IMR-90 (cell line): ENCODE measurements at regions of chrX and their contacts with region 1.

Region 1: DNA sequence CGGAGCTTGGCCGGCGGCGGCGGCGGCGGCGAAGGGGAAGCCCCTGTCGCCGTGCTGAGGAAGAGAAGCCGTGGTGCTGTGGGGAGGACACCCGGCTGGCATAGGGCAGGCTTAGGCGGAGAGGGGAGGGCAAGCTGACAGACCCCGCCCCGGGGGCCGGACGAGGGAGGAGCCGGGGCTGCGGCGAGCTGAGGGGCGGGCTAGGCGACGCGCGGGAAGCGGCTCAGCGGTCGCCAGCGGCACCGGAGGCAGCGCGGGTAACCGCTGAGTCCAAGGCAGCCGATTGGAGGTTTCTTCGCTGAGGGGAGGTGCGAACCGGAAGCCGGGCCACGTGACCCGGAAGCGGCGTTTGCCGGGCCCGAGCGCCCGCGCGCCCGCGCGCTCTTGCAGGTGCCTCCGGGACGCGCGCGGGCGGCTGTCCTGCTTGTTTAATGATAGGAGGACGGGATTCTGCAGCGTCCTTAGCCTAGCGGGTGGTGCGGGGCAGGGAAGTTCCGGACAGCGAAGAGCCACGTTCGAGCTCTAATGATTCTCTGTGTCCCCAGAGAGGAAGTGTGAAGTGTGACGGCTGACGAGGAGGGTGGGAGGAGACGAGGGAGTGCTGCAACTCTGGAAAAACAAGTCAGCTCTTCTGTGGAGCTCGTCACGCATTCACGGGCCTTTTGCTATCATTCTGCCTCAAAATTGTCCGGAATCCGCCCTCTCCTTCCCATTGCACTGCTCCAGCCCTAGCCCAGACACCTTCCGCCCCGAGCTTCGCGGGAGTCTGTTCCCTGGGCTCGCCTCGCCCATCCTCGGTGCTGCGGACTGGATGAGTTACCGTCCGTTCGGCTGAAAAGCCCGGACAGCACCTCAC is at the start of gene AP1S2:
- DNase-seq: peak; percentile 92
- ATAC-seq: peak; percentile 99
- H3K4me3 ChIP-seq: peak within 1 kb of the TSS; percentile 60
- H3K27ac ChIP-seq: peak within 1 kb of the TSS; percentile 32
- H3K4me1 ChIP-seq: no peaks in the 10 kb centered on the region
- H3K27me3 ChIP-seq: peaks cover 4% of the 10 kb centered on the region; the same call in 1 of the 2 replicates
- CTCF ChIP-seq: no peak
- POLR2A ChIP-seq: no peak
- RAD21 ChIP-seq: no peak
- total RNA-seq, gene AP1S2: 28.3 and 117 TPM in 2 replicates

Region 2: DNA sequence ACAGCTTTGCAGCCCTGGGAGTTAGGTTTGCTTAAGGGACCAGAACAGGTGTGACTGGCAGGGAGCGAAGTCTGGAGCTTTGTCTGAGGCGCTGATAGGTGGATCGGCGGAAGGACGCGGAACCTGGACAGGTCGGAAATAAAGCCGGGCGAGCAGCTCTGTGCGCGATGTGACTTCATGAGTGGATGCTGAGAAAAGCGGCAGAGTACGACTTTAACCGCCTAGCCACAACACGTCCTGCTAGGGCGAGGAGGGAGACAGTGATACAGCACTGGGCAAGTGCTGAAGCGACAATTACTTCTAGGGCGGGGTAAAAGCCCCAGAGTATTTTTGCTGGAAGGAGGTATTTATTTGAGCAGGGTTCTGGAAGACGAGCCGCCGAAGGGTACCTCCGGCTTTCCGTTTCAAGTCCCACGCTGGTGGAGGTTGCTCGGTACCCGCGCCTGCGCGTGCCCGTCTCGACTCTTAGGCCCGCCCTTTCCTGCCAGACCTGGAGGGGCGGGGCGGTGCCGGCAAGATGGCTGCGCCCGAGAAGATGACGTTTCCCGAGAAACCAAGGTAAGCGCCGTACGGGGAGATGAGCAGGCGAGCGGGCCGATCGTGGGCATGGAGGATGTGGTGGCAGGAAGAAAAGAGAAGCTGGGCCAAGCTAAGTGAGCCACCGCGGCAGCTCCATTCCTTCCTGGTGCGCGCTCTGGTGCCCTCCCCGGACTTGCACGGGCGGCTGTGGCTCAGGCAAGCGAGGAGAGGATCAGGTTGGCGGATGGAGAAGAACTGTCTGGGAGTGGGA is 64.8 kb before region 1 on chrX and contains the start of gene ZRSR2:
- CTCF ChIA-PET with region 1: no interaction called
- POLR2A ChIA-PET with region 1: no interaction called
- dilution Hi-C with region 1: no loop called
- in situ Hi-C with region 1: no loop called
- intact Hi-C with region 1: loop called (anchors 2 kb)
- DNase-seq: peak; percentile 78
- ATAC-seq: peak; percentile 99
- H3K4me3 ChIP-seq: peak within 1 kb of the TSS; percentile 77
- H3K27ac ChIP-seq: peak within 1 kb of the TSS; percentile 61
- H3K4me1 ChIP-seq: no peaks in the 10 kb centered on the region; the same call in 1 of the 2 replicates
- H3K27me3 ChIP-seq: no peaks in the 10 kb centered on the region
- CTCF ChIP-seq: no peak
- POLR2A ChIP-seq: peak; percentile 41; the same call in 1 of the 2 replicates
- RAD21 ChIP-seq: no peak
- total RNA-seq, gene ZRSR2: 4.7 and 6.9 TPM in 2 replicates

Region 3: DNA sequence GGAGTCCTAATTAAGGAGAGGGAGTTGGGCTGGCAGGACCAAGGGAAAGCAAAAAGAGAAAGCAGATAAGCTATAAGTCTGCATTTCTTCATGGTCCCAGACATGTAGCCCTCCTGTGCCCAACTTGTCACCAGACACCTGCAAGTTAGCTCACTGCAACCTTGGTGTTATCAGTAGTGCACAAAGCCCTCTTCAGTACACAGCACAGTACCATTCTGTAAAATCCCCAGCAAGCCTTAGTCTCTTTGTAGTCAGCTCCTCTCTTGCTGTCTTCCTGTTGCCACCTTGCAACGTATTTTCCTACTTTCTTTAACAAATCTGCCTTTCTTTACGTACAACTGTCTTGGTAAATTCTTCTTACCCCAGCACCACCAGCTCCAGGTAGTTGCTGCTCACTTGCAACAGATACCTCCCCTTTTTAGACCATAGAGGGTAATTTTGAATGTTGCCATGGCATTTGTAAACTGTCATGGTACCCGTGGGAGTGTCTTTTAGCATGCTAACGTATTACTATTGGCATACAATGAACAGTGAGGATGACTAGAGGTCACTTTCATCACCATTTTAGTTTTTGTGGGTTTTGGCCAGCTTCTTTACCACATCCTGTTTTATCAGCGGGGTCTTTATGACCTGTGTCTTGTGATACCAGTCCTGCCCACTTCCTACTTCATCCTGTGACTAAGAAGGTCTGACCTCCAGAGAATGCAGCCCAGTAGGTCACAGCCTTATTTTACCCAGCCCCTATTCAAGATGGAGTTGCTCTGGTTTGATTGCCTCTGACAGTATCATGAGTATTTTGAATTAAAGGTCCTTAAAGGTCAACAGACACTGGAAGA is 28.0 kb after region 1 on chrX:
- CTCF ChIA-PET with region 1: no interaction called
- POLR2A ChIA-PET with region 1: no interaction called
- dilution Hi-C with region 1: no loop called
- in situ Hi-C with region 1: no loop called
- intact Hi-C with region 1: no loop called
- DNase-seq: peak; percentile 43
- ATAC-seq: no peak
- H3K4me3 ChIP-seq: no peak overlapping the region
- H3K27ac ChIP-seq: no peak overlapping the region
- H3K4me1 ChIP-seq: no peaks in the 10 kb centered on the region
- H3K27me3 ChIP-seq: peaks cover 2% of the 10 kb centered on the region; the same call in 1 of the 2 replicates
- CTCF ChIP-seq: no peak
- POLR2A ChIP-seq: no peak
- RAD21 ChIP-seq: no peak

Region 4: GRCh38 chrX:16123222-16123786 is 268.4 kb after region 1 on chrX and contains the start of gene GRPR:
- CTCF ChIA-PET with region 1: no interaction called
- POLR2A ChIA-PET with region 1: no interaction called
- dilution Hi-C with region 1: no loop called
- in situ Hi-C with region 1: no loop called
- intact Hi-C with region 1: no loop called
- DNase-seq: peak; percentile 92
- ATAC-seq: peak; percentile 100
- H3K4me3 ChIP-seq: no peak within 1 kb of the TSS; the same call in 1 of the 2 replicates
- H3K27ac ChIP-seq: no peak within 1 kb of the TSS
- H3K4me1 ChIP-seq: peaks cover 2% of the 10 kb centered on the region; the same call in 1 of the 2 replicates
- H3K27me3 ChIP-seq: no peaks in the 10 kb centered on the region; the same call in 1 of the 2 replicates
- CTCF ChIP-seq: peak; percentile 80
- POLR2A ChIP-seq: no peak
- RAD21 ChIP-seq: peak; percentile 83
- total RNA-seq, gene GRPR: 13.6 and 16.4 TPM in 2 replicates

Region 5: DNA sequence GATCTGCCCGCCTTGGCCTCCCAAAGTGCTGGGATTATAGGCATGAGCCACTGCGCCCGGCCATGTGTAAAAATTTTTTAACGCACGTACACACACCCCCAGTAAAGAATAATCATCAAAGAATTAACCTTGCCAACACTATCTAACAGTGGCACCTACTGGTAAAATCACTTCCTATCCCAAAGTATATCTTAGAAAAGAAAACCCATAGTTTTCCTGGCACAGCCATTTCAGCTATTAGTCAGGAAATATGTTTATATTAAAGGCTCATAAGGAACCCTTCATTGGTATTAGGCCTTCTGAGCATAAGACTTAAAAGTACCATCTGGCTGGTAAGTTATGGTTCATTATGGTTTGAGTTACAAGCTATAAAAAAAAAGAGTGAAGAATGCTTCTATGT is 809.1 kb after region 1 on chrX:
- CTCF ChIA-PET with region 1: no interaction called
- POLR2A ChIA-PET with region 1: no interaction called
- dilution Hi-C with region 1: no loop called
- in situ Hi-C with region 1: no loop called
- intact Hi-C with region 1: loop called (anchors 5 kb)
- DNase-seq: peak; percentile 67
- ATAC-seq: peak; percentile 56
- H3K4me3 ChIP-seq: no peak overlapping the region
- H3K27ac ChIP-seq: no peak overlapping the region
- H3K4me1 ChIP-seq: peaks cover 11% of the 10 kb centered on the region
- H3K27me3 ChIP-seq: no peaks in the 10 kb centered on the region; the same call in 1 of the 2 replicates
- CTCF ChIP-seq: peak; percentile 57
- POLR2A ChIP-seq: no peak
- RAD21 ChIP-seq: peak; percentile 61